Naive thymus-derived CD4-positive, alpha-beta T cell (primary cell): ENCODE measurements at regions of chr19 and their contacts with region 1.

Region 1: DNA sequence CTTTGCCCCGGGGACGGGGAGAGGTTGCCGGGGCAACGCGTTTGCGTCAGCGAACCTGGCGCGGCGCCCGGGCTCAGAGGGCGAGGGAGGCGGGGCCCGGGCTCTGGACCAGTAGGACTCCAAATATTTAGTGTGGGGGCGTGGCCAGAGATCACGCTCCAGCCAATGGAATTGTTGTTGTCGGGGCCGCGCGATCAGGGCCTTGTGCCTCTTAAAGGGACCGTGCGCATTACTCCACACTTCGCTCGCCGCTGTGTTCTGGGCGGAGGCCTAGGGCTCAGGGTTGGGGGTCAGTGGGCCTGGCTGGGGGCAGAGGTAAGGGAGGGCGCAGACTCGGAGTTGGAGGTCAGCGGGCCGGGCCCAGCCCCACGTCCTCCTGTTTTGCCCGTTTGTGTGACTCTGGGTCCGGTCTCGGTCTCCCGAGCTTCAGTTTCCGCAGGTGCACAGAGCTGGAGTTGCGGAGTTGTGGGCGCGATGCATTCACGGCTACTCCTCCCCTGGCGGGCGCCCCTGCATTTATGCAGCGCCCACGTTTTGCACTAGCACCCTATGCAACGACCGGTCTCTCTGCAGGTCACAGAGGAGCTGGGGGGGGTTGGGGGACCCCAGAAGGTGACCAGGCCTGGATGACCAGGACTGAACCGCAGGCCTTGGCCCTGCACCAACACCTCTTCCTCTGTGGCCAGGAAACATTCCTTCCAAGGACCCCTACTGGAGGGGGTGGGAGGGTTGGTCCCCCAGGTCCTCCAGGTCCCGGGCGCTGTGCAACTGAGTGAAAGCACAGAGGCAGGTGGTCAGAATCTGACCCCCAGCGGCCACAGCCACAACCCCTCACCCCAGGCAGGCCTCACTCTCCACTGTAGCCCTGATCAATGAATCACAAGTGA is 10.7 kb upstream of the MKNK2 start:
- DNase-seq: peak; percentile 99 to 100 (median 100)
- ATAC-seq: peak; percentile 94
- H3K4me3 ChIP-seq: peak overlapping the region; percentile 72
- H3K4me3 Mint-ChIP-seq: peak overlapping the region; percentile 91 to 97 (median 94)
- H3K27ac ChIP-seq: peak overlapping the region; percentile 99
- H3K27ac Mint-ChIP-seq: peak overlapping the region; percentile 85 to 99 (median 97)
- H3K4me1 ChIP-seq: peaks cover 32 to 49% of the 10 kb centered on the region in 2 donors
- H3K4me1 Mint-ChIP-seq: peaks cover 20 to 60% (median 24%) of the 10 kb centered on the region in 7 donors
- H3K27me3 ChIP-seq: no peaks in the 10 kb centered on the region
- H3K27me3 Mint-ChIP-seq: no peaks in the 10 kb centered on the region

Region 2: DNA sequence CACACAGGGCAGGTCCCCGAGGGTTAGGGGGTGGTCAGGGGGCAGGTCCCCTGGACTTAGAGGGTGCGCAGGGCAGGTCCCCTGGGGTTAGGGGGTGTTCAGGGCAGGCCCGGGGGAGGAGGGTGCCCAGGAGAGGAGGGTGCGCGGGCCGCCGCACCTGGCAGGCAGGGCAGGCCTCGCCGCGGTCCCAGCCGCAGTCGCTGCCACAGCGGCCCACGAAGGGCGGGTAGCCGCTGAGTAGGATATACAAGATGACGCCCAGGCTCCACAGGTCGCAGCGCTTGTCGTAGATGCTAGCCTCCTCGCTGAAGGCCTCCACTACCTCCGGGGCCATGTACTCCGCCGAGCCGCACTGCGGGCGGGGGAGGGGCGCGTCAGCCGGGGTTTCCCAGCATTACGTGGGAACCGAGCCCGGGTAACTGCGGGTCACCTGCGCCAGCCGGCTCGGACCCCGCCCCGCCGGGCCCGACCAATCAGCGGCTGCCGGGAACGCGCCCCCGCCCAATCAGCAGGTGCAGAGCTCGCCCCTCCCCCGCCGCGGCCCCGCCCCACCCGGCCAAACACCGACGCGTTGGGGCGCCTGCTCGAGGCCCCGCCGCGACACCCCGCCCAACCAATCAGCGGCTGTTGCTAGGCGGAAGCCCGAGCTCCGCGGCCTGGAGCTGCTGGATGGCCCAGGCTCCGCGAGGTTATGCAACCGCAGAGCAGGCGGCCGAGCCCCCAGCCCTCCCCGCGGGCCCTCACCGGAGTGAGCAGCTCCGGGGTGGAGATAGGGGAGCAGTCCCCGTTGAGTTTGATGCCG is 19.9 kb before region 1 on chr19:
- CTCF ChIA-PET with region 1: no interaction called
- POLR2A ChIA-PET with region 1: interaction called, 24 read pairs
- intact Hi-C with region 1: loop called (anchors 1 kb)
- DNase-seq: peak; percentile 98 to 100 (median 99)
- ATAC-seq: peak; percentile 91
- H3K4me3 ChIP-seq: peak overlapping the region; percentile 66
- H3K4me3 Mint-ChIP-seq: peak overlapping the region in 9 of 10 donors; percentile 27 to 79 (median 61)
- H3K27ac ChIP-seq: peak overlapping the region; percentile 97
- H3K27ac Mint-ChIP-seq: peak overlapping the region; percentile 69 to 96 (median 92)
- H3K4me1 ChIP-seq: peaks cover 26 to 48% of the 10 kb centered on the region in 2 donors
- H3K4me1 Mint-ChIP-seq: peaks cover 4 to 36% (median 23%) of the 10 kb centered on the region in 7 donors
- H3K27me3 ChIP-seq: no peaks in the 10 kb centered on the region
- H3K27me3 Mint-ChIP-seq: no peaks in the 10 kb centered on the region

Region 3: DNA sequence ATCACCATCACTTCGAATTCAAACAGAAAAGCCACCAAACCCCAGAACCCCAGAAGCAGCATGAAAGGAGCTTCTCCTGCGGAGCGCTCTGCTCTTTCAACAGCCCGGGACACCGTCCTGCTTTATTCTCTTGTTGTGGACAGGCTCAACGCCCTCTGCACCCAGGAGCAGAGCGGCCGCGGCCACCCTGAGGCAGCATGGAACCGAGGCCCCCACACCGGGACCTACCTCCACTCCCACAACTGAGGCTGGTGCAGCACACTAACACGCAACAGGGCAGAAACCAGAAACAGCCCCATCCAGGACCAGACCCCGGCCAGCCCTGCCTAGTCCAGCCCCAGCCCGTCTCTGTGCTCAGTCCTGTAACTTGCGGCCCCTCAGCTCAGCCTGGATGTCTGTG is 82.5 kb after region 1 on chr19:
- CTCF ChIA-PET with region 1: no interaction called
- POLR2A ChIA-PET with region 1: no interaction called
- intact Hi-C with region 1: no loop called
- DNase-seq: no peak
- ATAC-seq: no peak
- H3K4me3 ChIP-seq: no peak overlapping the region
- H3K4me3 Mint-ChIP-seq: peak overlapping the region in 2 of 10 donors; percentile 16 to 27
- H3K27ac ChIP-seq: no peak overlapping the region
- H3K27ac Mint-ChIP-seq: no peak overlapping the region
- H3K4me1 ChIP-seq: peaks cover 16 to 19% of the 10 kb centered on the region in 2 donors
- H3K4me1 Mint-ChIP-seq: peaks cover 20 to 63% (median 31%) of the 10 kb centered on the region in 7 donors
- H3K27me3 ChIP-seq: no peaks in the 10 kb centered on the region
- H3K27me3 Mint-ChIP-seq: no peaks in the 10 kb centered on the region